ENCODE measurements at regions of chr5 and their contacts with region 1.

Region 1: GRCh38 chr5:81751009-81751835 is at the start of gene SSBP2:
- DNase-seq: peak; percentile 100
- H3K4me3 ChIP-seq: peak within 1 kb of the TSS; percentile 73 to 97 (median 91)
- H3K27ac ChIP-seq: peak within 1 kb of the TSS; percentile 93 to 99 (median 97)
- H3K4me1 ChIP-seq: peaks cover 4 to 40% (median 23%) of the 10 kb centered on the region in 4 donors
- H3K27me3 ChIP-seq: no peaks in the 10 kb centered on the region
- CTCF ChIP-seq: no peak
- EP300 ChIP-seq: peak; percentile 35
- POLR2A ChIP-seq: peak; percentile 41
- total RNA-seq, gene SSBP2: 22.8 to 50.4 (median 34.4) TPM

Region 2: DNA sequence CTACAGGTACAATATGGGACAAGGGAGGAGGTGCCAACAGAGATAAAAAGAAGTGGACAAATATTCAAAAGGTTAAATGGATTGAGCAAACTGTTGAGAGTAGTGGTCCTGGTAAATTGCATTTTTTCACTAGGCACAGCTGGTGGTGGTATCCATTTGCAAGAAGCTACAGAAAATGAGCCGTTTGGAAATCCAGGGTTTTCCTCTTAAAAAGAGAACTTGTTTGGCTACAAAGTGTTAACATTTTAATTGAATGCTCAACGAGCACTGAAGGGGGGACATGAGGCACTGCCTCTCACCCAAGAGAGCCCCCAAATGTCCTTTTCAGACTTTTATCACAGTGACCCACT is 450.3 kb before region 1 on chr5:
- in situ Hi-C with region 1: no loop called
- intact Hi-C with region 1: no loop called
- DNase-seq: no peak
- H3K4me3 ChIP-seq: peak overlapping the region; percentile 75 to 90 (median 81)
- H3K27ac ChIP-seq: peak overlapping the region; percentile 89 to 94 (median 92)
- H3K4me1 ChIP-seq: peaks cover 0 to 34% (median 22%) of the 10 kb centered on the region in 4 donors
- H3K27me3 ChIP-seq: no peaks in the 10 kb centered on the region
- CTCF ChIP-seq: no peak
- EP300 ChIP-seq: no peak
- POLR2A ChIP-seq: no peak

Region 3: GRCh38 chr5:81506900-81507588 is 244.2 kb before region 1 on chr5:
- in situ Hi-C with region 1: loop called (anchors 10 to 25 kb)
- intact Hi-C with region 1: loop called (anchors 5 kb)
- DNase-seq: peak; percentile 48
- H3K4me3 ChIP-seq: no peak overlapping the region
- H3K27ac ChIP-seq: peak overlapping the region in 3 of 4 donors; percentile 9 to 50 (median 38)
- H3K4me1 ChIP-seq: peaks cover 0 to 13% (median 2%) of the 10 kb centered on the region in 4 donors
- H3K27me3 ChIP-seq: no peaks in the 10 kb centered on the region
- CTCF ChIP-seq: peak; percentile 77 to 86 (median 81)
- EP300 ChIP-seq: no peak
- POLR2A ChIP-seq: no peak

Region 4: GRCh38 chr5:81787474-81788242 is 36.4 kb after region 1 on chr5:
- in situ Hi-C with region 1: no loop called
- intact Hi-C with region 1: loop called (anchors 2 kb)
- DNase-seq: peak; percentile 55
- H3K4me3 ChIP-seq: no peak overlapping the region
- H3K27ac ChIP-seq: peak overlapping the region; percentile 23 to 66 (median 46)
- H3K4me1 ChIP-seq: peaks cover 8 to 24% (median 14%) of the 10 kb centered on the region in 4 donors
- H3K27me3 ChIP-seq: no peaks in the 10 kb centered on the region
- CTCF ChIP-seq: no peak
- EP300 ChIP-seq: no peak
- POLR2A ChIP-seq: no peak

Region 5: DNA sequence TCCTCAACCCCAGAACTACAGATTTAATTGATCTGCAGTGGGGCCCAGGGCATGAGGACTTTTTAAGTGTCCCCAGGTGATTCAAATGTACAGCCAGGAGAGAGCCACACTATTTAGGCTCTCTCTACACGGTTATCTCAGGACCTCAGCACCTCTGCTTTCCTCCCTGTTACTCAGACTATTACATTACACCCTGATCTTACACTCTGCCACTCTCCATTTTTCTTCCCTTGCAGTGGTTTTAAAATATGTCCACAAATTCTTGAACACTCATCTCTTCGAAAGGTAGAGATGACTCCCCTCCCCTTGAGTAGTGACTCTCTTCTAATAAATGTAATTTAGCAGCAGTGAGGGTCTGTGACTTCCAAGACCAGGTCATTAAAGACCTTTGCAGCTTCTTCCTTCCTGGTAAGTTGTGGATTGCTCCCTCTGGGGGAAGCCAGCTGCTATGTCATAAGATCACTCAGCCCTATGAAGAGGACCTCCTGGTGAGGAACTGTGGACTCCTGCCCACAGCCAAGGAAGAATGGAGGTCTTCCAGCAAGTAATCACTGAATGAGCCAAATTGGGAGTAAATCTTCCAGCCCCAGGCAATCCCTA is 87.2 kb after region 1 on chr5:
- in situ Hi-C with region 1: loop called in 3 of 4 experiments (anchors 5 to 10 kb)
- intact Hi-C with region 1: no loop called
- DNase-seq: peak; percentile 26
- H3K4me3 ChIP-seq: no peak overlapping the region
- H3K27ac ChIP-seq: no peak overlapping the region
- H3K4me1 ChIP-seq: no peaks in the 10 kb centered on the region
- H3K27me3 ChIP-seq: no peaks in the 10 kb centered on the region
- CTCF ChIP-seq: peak; percentile 32 to 48 (median 38)
- EP300 ChIP-seq: no peak
- POLR2A ChIP-seq: no peak

Region 6: GRCh38 chr5:81851481-81852178 is 100.4 kb after region 1 on chr5:
- in situ Hi-C with region 1: loop called in 3 of 4 experiments (anchors 5 to 10 kb)
- intact Hi-C with region 1: loop called (anchors 1 kb)
- DNase-seq: peak; percentile 97
- H3K4me3 ChIP-seq: peak overlapping the region; percentile 41 to 65 (median 50)
- H3K27ac ChIP-seq: peak overlapping the region; percentile 85 to 97 (median 90)
- H3K4me1 ChIP-seq: peaks cover 15 to 50% (median 32%) of the 10 kb centered on the region in 4 donors
- H3K27me3 ChIP-seq: no peaks in the 10 kb centered on the region
- CTCF ChIP-seq: no peak
- EP300 ChIP-seq: peak; percentile 3
- POLR2A ChIP-seq: peak; percentile 62

Region 7: GRCh38 chr5:82165740-82166530 is 414.7 kb after region 1 on chr5:
- in situ Hi-C with region 1: loop called in 2 of 4 experiments (anchors 25 kb)
- intact Hi-C with region 1: no loop called
- DNase-seq: peak; percentile 61
- H3K4me3 ChIP-seq: no peak overlapping the region
- H3K27ac ChIP-seq: peak overlapping the region; percentile 45 to 65 (median 56)
- H3K4me1 ChIP-seq: peaks cover 4 to 26% (median 8%) of the 10 kb centered on the region in 4 donors
- H3K27me3 ChIP-seq: no peaks in the 10 kb centered on the region
- CTCF ChIP-seq: peak; percentile 65 to 69 (median 68)
- EP300 ChIP-seq: no peak
- POLR2A ChIP-seq: no peak